Adrenal gland (tissue), 19 donors: ENCODE measurements at regions of chr1 and their contacts with region 1.

Region 1: GRCh38 chr1:160093624-160094290 is 4.7 kb downstream of the IGSF8 start:
- DNase-seq: no peak
- H3K4me3 ChIP-seq: no peak overlapping the region
- H3K27ac ChIP-seq: no peak overlapping the region
- H3K4me1 ChIP-seq: peaks cover 0 to 18% of the 10 kb centered on the region in 2 donors
- H3K27me3 ChIP-seq: no peaks in the 10 kb centered on the region
- CTCF ChIP-seq: no peak
- POLR2A ChIP-seq: no peak

Region 2: GRCh38 chr1:159444511-159444910 is 649.2 kb before region 1 on chr1:
- intact Hi-C with region 1: no loop called
- DNase-seq: no peak
- H3K4me3 ChIP-seq: no peak overlapping the region
- H3K27ac ChIP-seq: no peak overlapping the region
- H3K4me1 ChIP-seq: no peaks in the 10 kb centered on the region
- H3K27me3 ChIP-seq: no peaks in the 10 kb centered on the region
- CTCF ChIP-seq: no peak
- POLR2A ChIP-seq: no peak

Region 3: GRCh38 chr1:160206036-160206389 is 112.3 kb after region 1 on chr1:
- intact Hi-C with region 1: no loop called
- DNase-seq: peak in 6 of 7 donors; percentile 49 to 72 (median 54)
- H3K4me3 ChIP-seq: peak overlapping the region in 2 of 4 donors; percentile 74 to 85
- H3K27ac ChIP-seq: peak overlapping the region in 4 of 5 donors; percentile 73 to 96 (median 86)
- H3K4me1 ChIP-seq: peaks cover 19 to 56% of the 10 kb centered on the region in 2 donors
- H3K27me3 ChIP-seq: no peaks in the 10 kb centered on the region
- CTCF ChIP-seq: no peak
- POLR2A ChIP-seq: no peak

Region 4: DNA sequence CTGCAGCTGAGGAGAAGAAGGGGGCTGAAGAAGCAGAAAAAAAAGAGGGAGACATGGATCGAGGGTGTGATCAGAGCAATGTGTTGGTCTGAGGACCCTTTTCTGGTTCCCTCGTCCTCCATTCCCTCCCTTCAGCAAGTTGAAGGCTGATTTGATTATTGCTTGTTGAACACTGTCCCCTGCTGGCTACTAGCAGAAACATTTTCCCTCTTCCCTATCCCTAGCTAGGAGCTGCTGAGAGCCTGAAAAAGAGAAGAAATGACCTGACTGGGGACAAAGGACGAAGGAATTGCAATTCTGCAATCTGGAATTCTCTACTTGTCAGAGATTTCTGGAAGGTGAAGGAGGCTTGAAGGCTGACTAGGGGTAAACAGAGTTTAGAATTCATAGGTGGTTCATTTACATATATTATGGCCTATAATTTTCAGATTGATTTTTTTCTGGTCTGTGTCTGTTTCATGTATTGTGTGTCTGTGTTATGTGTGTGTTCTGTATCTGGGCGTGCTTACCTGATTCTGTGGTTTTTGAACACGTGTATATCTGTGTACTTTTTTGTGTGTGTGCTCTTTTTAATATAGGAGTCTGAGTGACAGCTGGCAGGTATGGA is 282.9 kb after region 1 on chr1:
- intact Hi-C with region 1: loop called in 1 of 2 experiments (anchors 5 kb)
- DNase-seq: peak in 6 of 7 donors; percentile 18 to 59 (median 36)
- H3K4me3 ChIP-seq: no peak overlapping the region
- H3K27ac ChIP-seq: no peak overlapping the region
- H3K4me1 ChIP-seq: peaks cover 0 to 8% of the 10 kb centered on the region in 2 donors
- H3K27me3 ChIP-seq: peaks cover 10% of the 10 kb centered on the region
- CTCF ChIP-seq: peak; percentile 80 to 98 (median 91)
- POLR2A ChIP-seq: no peak